HEK293 (cell line): ENCODE measurements at regions of chr6 and their contacts with region 1.

Region 1: GRCh38 chr6:151209071-151209831 is 30.5 kb upstream of the AKAP12 start:
- H3K4me3 ChIP-seq: peak overlapping the region; percentile 27
- H3K27ac ChIP-seq: no peak overlapping the region
- H3K4me1 ChIP-seq: no peaks in the 10 kb centered on the region; the same call in 1 of the 2 replicates
- CTCF ChIP-seq: no peak

Region 2: GRCh38 chr6:151170622-151171246 is 38.5 kb before region 1 on chr6:
- CTCF ChIA-PET with region 1: no interaction called
- POLR2A ChIA-PET with region 1: interaction called, 10 read pairs
- H3K4me3 ChIP-seq: no peak overlapping the region
- H3K27ac ChIP-seq: no peak overlapping the region
- H3K4me1 ChIP-seq: no peaks in the 10 kb centered on the region
- CTCF ChIP-seq: no peak

Region 3: GRCh38 chr6:151186306-151186705 is 22.9 kb before region 1 on chr6:
- CTCF ChIA-PET with region 1: no interaction called
- POLR2A ChIA-PET with region 1: no interaction called
- H3K4me3 ChIP-seq: no peak overlapping the region
- H3K27ac ChIP-seq: no peak overlapping the region
- H3K4me1 ChIP-seq: no peaks in the 10 kb centered on the region
- CTCF ChIP-seq: no peak